ENCODE measurements at regions of chr12 and their contacts with region 1.

Region 1: GRCh38 chr12:53344824-53345485 is 8.8 kb upstream of the SP7 start:
- DNase-seq: peak; percentile 81
- H3K4me3 Mint-ChIP-seq: peak overlapping the region; percentile 95
- H3K27ac Mint-ChIP-seq: peak overlapping the region; percentile 75
- H3K4me1 Mint-ChIP-seq: peaks cover 16% of the 10 kb centered on the region
- H3K27me3 Mint-ChIP-seq: peaks cover 42% of the 10 kb centered on the region

Region 2: GRCh38 chr12:53078425-53079225 is 266.3 kb before region 1 on chr12:
- CTCF ChIA-PET with region 1: no interaction called
- DNase-seq: no peak
- H3K4me3 Mint-ChIP-seq: peak overlapping the region; percentile 92
- H3K27ac Mint-ChIP-seq: peak overlapping the region; percentile 92
- H3K4me1 Mint-ChIP-seq: peaks cover 29% of the 10 kb centered on the region
- H3K27me3 Mint-ChIP-seq: no peaks in the 10 kb centered on the region

Region 3: DNA sequence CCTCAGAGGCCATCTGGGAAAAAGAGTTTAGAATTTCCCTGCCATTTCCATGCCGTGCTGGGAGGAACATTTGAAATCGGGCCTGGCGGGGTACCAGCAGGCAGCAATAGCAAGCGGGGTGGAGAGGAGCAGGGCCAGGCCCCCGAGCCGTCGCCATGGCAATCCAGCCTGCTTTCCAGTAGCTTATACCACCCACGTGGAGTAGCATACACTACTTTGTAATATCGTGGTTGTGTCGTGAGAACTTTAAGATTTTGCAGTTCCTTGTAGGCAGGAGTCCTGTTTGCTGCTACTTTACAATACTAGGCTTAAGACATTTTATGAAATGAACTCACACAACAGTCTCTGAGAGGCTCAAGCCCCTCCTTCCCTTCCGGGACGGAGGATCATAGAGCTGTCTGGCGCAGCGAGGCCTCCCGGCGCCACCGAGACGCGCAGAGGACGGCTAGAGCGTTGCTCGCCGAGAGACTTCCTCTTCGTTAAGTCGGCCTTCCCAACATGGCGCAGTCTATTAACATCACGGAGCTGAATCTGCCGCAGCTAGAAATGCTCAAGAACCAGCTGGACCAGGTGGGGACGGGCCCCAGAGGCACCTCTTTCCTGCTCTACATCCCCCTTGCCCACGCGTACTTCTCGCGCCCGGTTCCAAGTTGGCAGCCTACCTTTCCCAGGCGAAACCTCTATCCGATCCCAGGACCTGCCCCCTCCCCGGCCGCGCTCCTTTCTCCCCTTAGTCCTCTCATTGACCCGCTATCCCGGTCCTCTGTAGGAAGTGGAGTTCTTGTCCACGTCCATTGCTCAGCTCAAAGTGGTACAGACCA is 49.7 kb before region 1 on chr12 and contains the start of gene PFDN5:
- CTCF ChIA-PET with region 1: interaction called, 10 read pairs
- DNase-seq: peak; percentile 92
- H3K4me3 Mint-ChIP-seq: peak within 1 kb of the TSS; percentile 100
- H3K27ac Mint-ChIP-seq: peak within 1 kb of the TSS; percentile 92
- H3K4me1 Mint-ChIP-seq: peaks cover 54% of the 10 kb centered on the region
- H3K27me3 Mint-ChIP-seq: no peaks in the 10 kb centered on the region

Region 4: GRCh38 chr12:53379389-53380103 is 34.6 kb after region 1 on chr12:
- CTCF ChIA-PET with region 1: interaction called, 78 read pairs
- DNase-seq: peak; percentile 100
- H3K4me3 Mint-ChIP-seq: no peak overlapping the region
- H3K27ac Mint-ChIP-seq: no peak overlapping the region
- H3K4me1 Mint-ChIP-seq: peaks cover 43% of the 10 kb centered on the region
- H3K27me3 Mint-ChIP-seq: no peaks in the 10 kb centered on the region

Region 5: GRCh38 chr12:53418221-53418620 is 73.3 kb after region 1 on chr12:
- CTCF ChIA-PET with region 1: interaction called, 18 read pairs
- DNase-seq: no peak
- H3K4me3 Mint-ChIP-seq: no peak overlapping the region
- H3K27ac Mint-ChIP-seq: no peak overlapping the region
- H3K4me1 Mint-ChIP-seq: peaks cover 26% of the 10 kb centered on the region
- H3K27me3 Mint-ChIP-seq: no peaks in the 10 kb centered on the region

Measured in activated naive CD4-positive, alpha-beta T cell treated with anti-CD3 and anti-CD28 coated beads, Interleukin-2, amount 10 ng/mL, durations not matched to agents 7 days and 5 days (primary cell).